ENCODE measurements at regions of chr22 and their contacts with region 1.

Region 1: GRCh38 chr22:46774253-46774979 is 12.0 kb downstream of the TBC1D22A start:
- DNase-seq: peak; percentile 66
- CTCF ChIP-seq: no peak

Region 2: DNA sequence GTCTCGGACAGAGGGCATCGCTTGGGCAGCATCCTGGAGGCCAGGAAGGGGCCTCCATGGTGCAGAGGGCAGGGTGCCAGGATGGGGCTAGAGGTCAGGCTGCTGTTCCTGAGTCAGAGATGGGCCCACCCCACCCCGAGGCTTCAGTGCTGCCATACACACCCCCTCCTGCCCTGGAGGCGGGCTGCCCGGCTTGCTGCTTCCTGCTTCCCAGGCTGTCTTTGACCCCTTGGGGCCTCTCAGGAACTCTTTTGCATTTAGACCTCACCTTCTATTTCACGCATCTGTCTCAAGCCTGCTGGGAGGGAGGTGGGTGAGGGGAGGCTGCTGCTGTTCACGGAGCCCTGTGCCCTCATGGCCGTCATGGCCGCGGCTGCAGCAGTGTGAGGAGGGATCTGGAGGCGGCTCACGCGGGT is 160.8 kb before region 1 on chr22:
- CTCF ChIA-PET with region 1: no interaction called
- POLR2A ChIA-PET with region 1: no interaction called
- DNase-seq: peak; percentile 54
- CTCF ChIP-seq: no peak

Region 3: DNA sequence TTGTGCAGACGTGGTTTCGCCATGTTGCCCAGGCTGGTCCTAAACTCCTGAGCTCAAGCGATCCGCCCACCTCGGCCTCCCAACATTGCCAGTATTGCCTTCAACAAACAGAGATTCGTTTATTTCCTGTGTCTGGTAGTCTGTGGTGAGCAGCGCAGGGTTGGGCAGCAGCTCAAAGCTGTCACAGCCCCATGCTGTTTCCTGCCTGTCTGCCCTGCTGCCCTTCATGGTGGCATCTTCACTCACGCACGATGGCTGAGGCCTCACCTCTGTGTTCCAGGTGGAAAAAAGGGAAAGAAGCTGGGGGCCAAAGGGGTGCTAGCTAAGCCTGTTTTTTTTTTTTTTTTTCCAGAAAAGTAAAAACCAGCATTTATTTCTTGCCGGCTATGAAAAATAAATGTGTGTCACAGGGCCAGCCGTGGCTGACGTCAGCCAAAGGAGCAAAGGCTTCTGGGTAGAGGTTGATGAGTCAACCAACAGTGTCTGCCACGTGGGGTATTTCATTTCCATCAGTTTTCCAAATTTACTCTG is 16.9 kb after region 1 on chr22:
- CTCF ChIA-PET with region 1: interaction called, 10 read pairs
- POLR2A ChIA-PET with region 1: no interaction called
- DNase-seq: no peak
- CTCF ChIP-seq: no peak